ENCODE measurements at regions of chr6 and their contacts with region 1.

Region 1: DNA sequence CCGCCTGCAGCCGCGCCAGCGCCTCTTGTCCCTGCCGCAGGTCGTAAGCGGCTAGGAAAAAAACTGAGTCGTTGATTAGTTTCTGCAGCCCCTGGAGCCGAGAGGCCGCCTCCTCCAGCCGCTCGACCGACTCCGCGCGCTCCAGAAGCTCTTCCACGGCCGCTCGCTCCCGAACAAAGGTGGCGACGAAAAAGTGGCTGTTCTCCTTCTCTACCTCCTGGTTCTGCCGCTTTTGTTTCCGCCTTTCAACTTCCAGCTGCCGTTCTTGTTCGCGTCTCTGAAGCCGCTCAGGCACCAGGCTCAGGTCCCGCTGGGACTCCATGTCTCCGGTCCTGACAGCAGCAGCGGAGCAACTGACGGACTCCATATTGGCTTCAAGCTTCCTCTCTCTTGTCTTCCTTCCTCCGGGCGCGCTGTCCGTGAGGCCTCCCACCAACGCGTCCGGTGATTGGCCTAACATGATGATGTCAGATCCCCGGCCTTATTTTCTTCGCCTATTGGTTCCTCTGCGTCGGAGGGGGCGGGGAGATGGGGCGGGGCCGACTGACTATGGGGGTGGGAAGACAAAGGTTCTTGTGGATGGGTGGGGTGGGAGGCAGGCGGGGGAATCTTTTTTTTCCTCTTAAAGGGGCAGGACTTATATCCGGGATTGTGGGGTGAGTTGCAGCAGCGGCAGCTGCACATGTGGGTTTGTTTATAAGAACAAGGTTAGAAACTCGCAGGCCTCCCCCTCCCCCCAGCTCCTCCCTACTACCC is at the start of gene TBCC:
- DNase-seq: peak; percentile 95 to 98
- H3K4me3 ChIP-seq: peak within 1 kb of the TSS; percentile 61 to 98 (median 95)
- H3K27ac ChIP-seq: peak within 1 kb of the TSS; percentile 85 to 93
- H3K4me1 ChIP-seq: peaks cover 5 to 10% of the 10 kb centered on the region in 2 donors
- H3K27me3 ChIP-seq: no peaks in the 10 kb centered on the region
- CTCF ChIP-seq: no peak
- POLR2A ChIP-seq: peak; percentile 75
- total RNA-seq, gene TBCC: 21.3 to 27.7 (median 26.3) TPM

Region 2: GRCh38 chr6:42782622-42783176 is 36.8 kb after region 1 on chr6:
- intact Hi-C with region 1: loop called (anchors 5 kb)
- DNase-seq: peak; percentile 69 to 73
- H3K4me3 ChIP-seq: peak overlapping the region; percentile 85 to 92 (median 86)
- H3K27ac ChIP-seq: peak overlapping the region; percentile 99 to 100
- H3K4me1 ChIP-seq: no peaks in the 10 kb centered on the region
- H3K27me3 ChIP-seq: no peaks in the 10 kb centered on the region
- CTCF ChIP-seq: no peak
- POLR2A ChIP-seq: peak; percentile 87

Region 3: GRCh38 chr6:42796171-42796570 is 50.3 kb after region 1 on chr6:
- intact Hi-C with region 1: no loop called
- DNase-seq: no peak
- H3K4me3 ChIP-seq: no peak overlapping the region
- H3K27ac ChIP-seq: no peak overlapping the region
- H3K4me1 ChIP-seq: no peaks in the 10 kb centered on the region
- H3K27me3 ChIP-seq: no peaks in the 10 kb centered on the region
- CTCF ChIP-seq: no peak
- POLR2A ChIP-seq: no peak

Region 4: GRCh38 chr6:42947950-42948349 is 202.1 kb after region 1 on chr6:
- intact Hi-C with region 1: no loop called
- DNase-seq: no peak
- H3K4me3 ChIP-seq: no peak overlapping the region
- H3K27ac ChIP-seq: no peak overlapping the region
- H3K4me1 ChIP-seq: no peaks in the 10 kb centered on the region
- H3K27me3 ChIP-seq: no peaks in the 10 kb centered on the region
- CTCF ChIP-seq: no peak
- POLR2A ChIP-seq: no peak

Region 5: DNA sequence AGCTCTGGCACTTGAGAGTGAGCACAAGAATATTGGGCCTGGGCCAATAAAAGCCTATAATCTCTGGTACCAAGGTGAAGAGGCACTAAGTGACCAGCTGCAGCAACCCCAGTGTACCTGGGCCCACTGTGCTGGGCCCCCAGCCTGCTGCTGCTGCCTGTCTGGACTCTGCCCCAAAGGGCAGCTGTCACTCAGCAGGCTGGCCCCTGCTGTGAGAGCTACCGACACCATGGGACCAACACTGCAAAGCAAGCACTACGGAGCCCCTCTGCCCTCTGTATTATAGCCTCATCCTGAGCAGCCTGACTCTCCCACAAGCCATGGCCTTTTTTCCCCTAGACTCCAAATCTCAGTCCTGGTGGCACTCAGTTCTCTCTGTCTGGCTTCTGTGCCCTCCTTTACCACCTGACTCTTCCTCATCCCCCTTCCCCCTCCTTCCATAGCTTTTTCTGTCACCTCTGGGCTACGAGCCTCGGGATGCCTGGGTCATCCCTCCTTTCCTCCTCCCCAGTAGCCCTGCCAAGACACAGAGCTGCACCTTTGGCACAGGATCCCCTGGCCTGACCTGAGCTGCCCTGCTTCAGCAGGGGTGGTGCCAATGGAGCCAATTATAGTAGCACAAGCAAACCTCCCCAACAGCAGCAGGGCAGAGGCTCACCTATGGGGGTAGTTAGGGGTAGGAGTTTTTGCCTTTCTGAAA is 289.8 kb after region 1 on chr6:
- intact Hi-C with region 1: no loop called
- DNase-seq: no peak
- H3K4me3 ChIP-seq: no peak overlapping the region
- H3K27ac ChIP-seq: no peak overlapping the region
- H3K4me1 ChIP-seq: no peaks in the 10 kb centered on the region
- H3K27me3 ChIP-seq: no peaks in the 10 kb centered on the region
- CTCF ChIP-seq: no peak
- POLR2A ChIP-seq: no peak